Naive thymus-derived CD4-positive, alpha-beta T cell (primary cell): ENCODE measurements at regions of chr13 and their contacts with region 1.

Region 1: GRCh38 chr13:31044377-31045285 is 112.2 kb downstream of the TEX26 start:
- DNase-seq: peak; percentile 54 to 79 (median 75)
- ATAC-seq: peak; percentile 95
- H3K4me3 ChIP-seq: no peak overlapping the region
- H3K4me3 Mint-ChIP-seq: peak overlapping the region in 9 of 10 donors; percentile 19 to 81 (median 52)
- H3K27ac ChIP-seq: no peak overlapping the region
- H3K27ac Mint-ChIP-seq: peak overlapping the region in 5 of 9 donors; percentile 7 to 90 (median 46)
- H3K4me1 ChIP-seq: peaks cover 22 to 30% of the 10 kb centered on the region in 2 donors
- H3K4me1 Mint-ChIP-seq: peaks cover 22 to 52% (median 40%) of the 10 kb centered on the region in 7 donors
- H3K27me3 ChIP-seq: no peaks in the 10 kb centered on the region
- H3K27me3 Mint-ChIP-seq: peaks cover 0 to 24% (median 5%) of the 10 kb centered on the region in 5 donors

Region 2: GRCh38 chr13:29595380-29596063 is 1449.1 kb before region 1 on chr13 and contains the start of gene SLC7A1:
- CTCF ChIA-PET with region 1: no interaction called
- POLR2A ChIA-PET with region 1: no interaction called
- intact Hi-C with region 1: loop called in 1 of 2 experiments (anchors 10 kb)
- DNase-seq: peak; percentile 74 to 93 (median 85)
- ATAC-seq: peak; percentile 95
- H3K4me3 ChIP-seq: peak within 1 kb of the TSS; percentile 73
- H3K4me3 Mint-ChIP-seq: peak within 1 kb of the TSS; percentile 88 to 94 (median 90)
- H3K27ac ChIP-seq: peak within 1 kb of the TSS; percentile 82
- H3K27ac Mint-ChIP-seq: peak within 1 kb of the TSS; percentile 74 to 96 (median 87)
- H3K4me1 ChIP-seq: peaks cover 6 to 7% of the 10 kb centered on the region in 2 donors
- H3K4me1 Mint-ChIP-seq: peaks cover 26 to 49% (median 43%) of the 10 kb centered on the region in 7 donors
- H3K27me3 ChIP-seq: no peaks in the 10 kb centered on the region
- H3K27me3 Mint-ChIP-seq: peaks cover 0 to 3% (median 2%) of the 10 kb centered on the region in 5 donors
- total RNA-seq, gene SLC7A1: 12.2 to 63.8 (median 28.2) TPM

Region 3: GRCh38 chr13:30679483-30680330 is 364.9 kb before region 1 on chr13:
- CTCF ChIA-PET with region 1: no interaction called
- POLR2A ChIA-PET with region 1: no interaction called
- intact Hi-C with region 1: loop called (anchors 1 to 5 kb)
- DNase-seq: peak in 6 of 9 donors; percentile 19 to 49 (median 36)
- ATAC-seq: peak; percentile 90
- H3K4me3 ChIP-seq: no peak overlapping the region
- H3K4me3 Mint-ChIP-seq: peak overlapping the region in 1 of 10 donors; percentile 1
- H3K27ac ChIP-seq: no peak overlapping the region
- H3K27ac Mint-ChIP-seq: peak overlapping the region in 5 of 9 donors; percentile 34 to 76 (median 42)
- H3K4me1 ChIP-seq: no peaks in the 10 kb centered on the region
- H3K4me1 Mint-ChIP-seq: peaks cover 4 to 15% (median 10%) of the 10 kb centered on the region in 7 donors
- H3K27me3 ChIP-seq: no peaks in the 10 kb centered on the region
- H3K27me3 Mint-ChIP-seq: peaks cover 0 to 26% (median 0%) of the 10 kb centered on the region in 5 donors

Region 4: DNA sequence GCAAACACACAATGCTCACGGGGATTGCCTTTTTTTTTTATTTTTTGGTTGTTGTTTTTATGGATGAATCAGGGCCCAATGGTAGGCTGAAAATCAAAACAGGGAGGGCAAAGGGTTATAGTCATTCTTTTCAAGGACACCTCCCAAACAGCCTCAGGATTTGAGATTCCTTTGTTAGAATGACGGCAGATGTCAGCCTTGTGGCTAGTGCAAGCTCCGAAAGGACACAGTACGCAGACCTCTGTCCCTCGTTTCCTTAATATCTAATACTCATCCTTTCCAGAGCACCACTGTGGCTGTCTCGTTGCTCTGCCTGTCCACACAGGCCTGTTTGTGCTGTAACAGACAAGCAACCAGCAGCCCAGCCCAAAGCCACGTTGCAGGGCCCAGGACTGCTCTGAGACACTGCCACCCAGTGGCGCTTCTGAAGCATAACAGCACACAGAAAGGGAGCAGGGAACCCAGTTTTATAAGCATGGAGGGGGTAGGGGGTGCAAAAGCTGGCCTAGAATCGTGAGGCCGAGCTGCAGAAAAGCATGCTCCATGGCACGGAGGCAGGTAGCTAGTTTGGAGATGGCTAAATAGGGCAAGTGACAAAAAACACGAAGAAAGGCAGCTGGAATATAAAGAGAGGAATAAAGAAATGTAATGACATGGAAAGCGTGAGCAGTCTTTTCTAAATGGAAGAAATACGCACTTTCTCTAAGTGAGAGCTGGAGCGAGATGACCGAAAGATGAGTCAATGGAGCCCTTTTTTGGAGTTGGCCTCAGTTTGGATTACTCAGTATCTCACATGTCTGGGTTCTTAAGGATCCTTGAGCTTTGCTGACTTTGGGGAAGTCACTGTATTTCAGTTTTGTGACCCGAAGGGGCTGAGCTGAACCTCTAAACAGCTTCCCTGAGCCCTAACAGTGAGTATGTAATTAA is 179.2 kb before region 1 on chr13:
- CTCF ChIA-PET with region 1: interaction called, 3 read pairs
- POLR2A ChIA-PET with region 1: no interaction called
- intact Hi-C with region 1: loop called (anchors 1 kb)
- DNase-seq: peak; percentile 7 to 46 (median 34)
- ATAC-seq: peak; percentile 91
- H3K4me3 ChIP-seq: no peak overlapping the region
- H3K4me3 Mint-ChIP-seq: no peak overlapping the region
- H3K27ac ChIP-seq: no peak overlapping the region
- H3K27ac Mint-ChIP-seq: no peak overlapping the region
- H3K4me1 ChIP-seq: no peaks in the 10 kb centered on the region
- H3K4me1 Mint-ChIP-seq: peaks cover 0 to 9% (median 4%) of the 10 kb centered on the region in 7 donors
- H3K27me3 ChIP-seq: no peaks in the 10 kb centered on the region
- H3K27me3 Mint-ChIP-seq: peaks cover 5 to 25% (median 8%) of the 10 kb centered on the region in 5 donors

Region 5: DNA sequence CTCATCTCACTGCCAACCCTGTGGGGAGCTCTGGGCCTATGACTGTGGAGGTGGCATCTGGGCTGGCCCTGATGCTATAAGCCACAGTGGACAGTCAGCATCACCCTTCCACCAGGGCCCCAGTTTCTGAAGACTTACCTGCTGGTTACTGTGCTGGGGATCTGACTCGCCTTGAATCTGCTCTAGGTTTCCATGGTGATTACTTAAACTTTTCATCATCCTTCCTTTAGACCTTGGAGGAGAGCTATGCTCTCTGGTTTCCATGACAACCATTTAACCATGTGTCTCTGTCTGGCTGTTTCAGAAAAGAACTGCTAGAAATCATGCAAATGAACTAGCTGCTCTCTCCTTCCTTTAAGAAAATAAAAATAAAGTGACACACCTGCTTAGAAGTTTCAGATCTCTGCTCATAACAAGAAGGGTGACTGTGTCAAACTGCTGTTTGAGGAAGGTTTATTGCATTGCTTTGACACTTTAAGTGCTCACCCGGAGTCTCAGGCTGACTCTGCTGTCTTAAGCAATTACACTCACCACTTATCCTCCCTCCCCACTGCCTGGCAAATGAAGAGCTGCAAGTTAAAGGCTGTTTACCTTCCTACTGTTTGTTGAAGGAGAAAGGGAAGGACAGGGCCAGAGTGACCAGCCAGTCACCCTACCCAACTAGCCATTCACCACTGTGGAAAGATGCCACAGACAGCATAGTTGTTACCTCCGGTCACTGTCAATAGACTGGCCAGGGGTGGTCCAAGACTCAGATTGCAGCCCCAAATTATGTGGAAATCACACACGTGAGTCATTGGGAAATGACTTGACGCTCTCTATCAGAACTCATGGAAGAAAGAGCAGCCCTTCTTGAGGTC is 29.5 kb after region 1 on chr13:
- CTCF ChIA-PET with region 1: no interaction called
- POLR2A ChIA-PET with region 1: no interaction called
- intact Hi-C with region 1: loop called in 1 of 2 experiments (anchors 1 kb)
- DNase-seq: peak in 1 of 9 donors; percentile 43
- ATAC-seq: no peak
- H3K4me3 ChIP-seq: no peak overlapping the region
- H3K4me3 Mint-ChIP-seq: peak overlapping the region in 1 of 10 donors; percentile 43
- H3K27ac ChIP-seq: no peak overlapping the region
- H3K27ac Mint-ChIP-seq: peak overlapping the region in 1 of 9 donors; percentile 82
- H3K4me1 ChIP-seq: no peaks in the 10 kb centered on the region
- H3K4me1 Mint-ChIP-seq: peaks cover 0 to 10% (median 0%) of the 10 kb centered on the region in 7 donors
- H3K27me3 ChIP-seq: no peaks in the 10 kb centered on the region
- H3K27me3 Mint-ChIP-seq: peaks cover 0 to 12% (median 10%) of the 10 kb centered on the region in 5 donors

Region 6: DNA sequence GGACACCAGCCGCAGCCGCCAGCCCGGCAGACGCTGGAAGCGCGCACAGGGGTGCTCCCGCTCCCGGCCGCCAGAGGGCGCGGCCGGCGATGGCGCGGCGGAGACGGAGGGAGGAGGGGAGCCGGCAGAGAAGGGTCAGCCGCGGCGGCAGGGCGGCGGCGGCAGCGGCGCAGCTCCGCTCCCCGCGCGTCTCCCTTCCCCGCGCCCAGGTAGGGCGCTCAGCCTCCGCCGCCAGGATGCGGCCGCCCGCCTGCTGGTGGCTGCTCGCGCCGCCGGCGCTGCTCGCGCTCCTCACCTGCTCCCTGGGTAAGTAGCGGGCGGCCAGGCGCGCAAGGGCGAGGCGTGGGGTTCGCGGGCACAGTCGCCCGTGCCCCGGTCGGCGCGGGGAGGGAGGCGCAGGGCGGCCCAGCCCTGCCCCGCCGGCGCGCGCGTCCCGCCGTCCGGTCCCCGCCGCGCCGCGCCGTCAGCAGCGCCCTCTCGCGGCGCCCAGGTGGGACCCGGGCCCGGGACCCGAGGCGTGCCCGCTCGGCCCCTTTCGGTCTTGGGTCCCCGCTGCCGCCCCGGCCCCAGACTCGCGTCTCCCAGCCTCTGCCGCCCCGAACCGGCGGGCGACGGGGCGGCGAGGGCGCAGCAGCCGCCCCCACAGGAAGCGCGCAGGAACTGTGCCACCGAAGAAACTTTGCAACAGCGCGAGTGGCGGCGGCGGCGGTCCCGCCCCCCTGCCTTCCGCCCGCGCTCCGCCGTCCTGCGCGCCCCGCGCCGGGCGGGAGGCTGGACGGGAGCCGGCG is 155.4 kb after region 1 on chr13 and contains the start of gene B3GLCT:
- CTCF ChIA-PET with region 1: no interaction called
- POLR2A ChIA-PET with region 1: no interaction called
- intact Hi-C with region 1: loop called (anchors 1 kb)
- DNase-seq: peak; percentile 70 to 90 (median 86)
- ATAC-seq: peak; percentile 88
- H3K4me3 ChIP-seq: peak within 1 kb of the TSS; percentile 65
- H3K4me3 Mint-ChIP-seq: peak within 1 kb of the TSS; percentile 83 to 92 (median 89)
- H3K27ac ChIP-seq: peak within 1 kb of the TSS; percentile 82
- H3K27ac Mint-ChIP-seq: peak within 1 kb of the TSS; percentile 78 to 94 (median 92)
- H3K4me1 ChIP-seq: peaks cover 5 to 6% of the 10 kb centered on the region in 2 donors
- H3K4me1 Mint-ChIP-seq: peaks cover 13 to 28% (median 23%) of the 10 kb centered on the region in 7 donors
- H3K27me3 ChIP-seq: no peaks in the 10 kb centered on the region
- H3K27me3 Mint-ChIP-seq: peaks cover 0 to 19% (median 0%) of the 10 kb centered on the region in 5 donors
- total RNA-seq, gene B3GLCT: 3.7 to 4.6 (median 4.4) TPM